ENCODE measurements at regions of chr4 and their contacts with region 1.

Region 1: DNA sequence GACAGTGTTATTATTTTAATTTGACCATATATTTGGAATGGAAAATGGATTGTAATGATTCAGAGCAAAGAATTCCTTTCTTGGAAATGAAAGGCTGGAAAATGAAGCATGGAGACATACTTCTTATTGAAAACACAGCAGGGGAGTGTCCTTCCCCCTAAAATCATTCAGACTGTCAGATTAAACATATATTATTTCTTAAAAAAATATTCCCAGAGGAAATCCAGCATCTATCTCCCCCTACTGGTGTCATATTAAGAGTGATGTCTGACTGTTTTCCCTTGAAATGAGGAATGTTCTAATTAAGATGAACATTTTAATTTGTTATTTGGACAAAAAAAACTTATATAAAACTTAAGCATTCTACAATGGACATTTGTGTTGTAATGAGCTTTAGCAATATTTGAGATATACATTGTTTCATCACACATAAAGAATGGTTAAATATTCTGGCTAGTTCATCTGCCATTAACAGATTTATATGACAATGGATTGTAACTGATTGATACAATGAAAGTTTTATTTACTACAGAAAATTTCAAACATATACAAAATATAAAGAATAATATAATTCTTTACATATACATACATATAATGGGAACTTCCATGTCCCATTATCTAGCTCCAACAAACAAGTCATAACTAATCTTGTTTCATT is 264.6 kb downstream of the SPRY1 start:
- DNase-seq: no peak
- ATAC-seq: no peak
- H3K4me3 ChIP-seq: no peak overlapping the region
- H3K27ac ChIP-seq: no peak overlapping the region
- H3K4me1 ChIP-seq: no peaks in the 10 kb centered on the region
- H3K27me3 ChIP-seq: no peaks in the 10 kb centered on the region
- CTCF ChIP-seq: peak in 8 of 9 donors; percentile 34 to 70 (median 55)

Region 2: DNA sequence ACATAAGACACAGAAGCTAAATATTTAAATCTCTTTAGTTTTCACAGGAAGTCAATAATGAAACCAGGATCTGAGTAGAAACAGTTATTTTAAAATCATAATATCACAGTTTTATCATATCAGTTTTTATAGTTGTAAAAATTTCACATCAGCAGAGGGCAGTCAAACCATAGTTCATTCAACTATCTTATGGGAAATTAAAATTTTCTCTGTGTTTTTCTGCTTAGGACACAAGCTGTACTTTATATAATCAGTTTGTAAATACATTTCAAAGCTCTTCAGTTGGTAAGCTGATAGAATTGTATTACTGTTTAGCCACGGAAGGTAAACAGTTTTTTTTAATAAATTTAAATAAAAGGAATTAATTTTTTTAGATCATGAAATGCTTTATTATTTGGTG is 534.0 kb before region 1 on chr4:
- intact Hi-C with region 1: loop called in 6 of 10 experiments (anchors 5 to 10 kb)
- DNase-seq: no peak
- ATAC-seq: peak in 3 of 8 donors; percentile 46 to 55 (median 49)
- H3K4me3 ChIP-seq: no peak overlapping the region
- H3K27ac ChIP-seq: peak overlapping the region in 4 of 10 donors; percentile 28 to 36 (median 33)
- H3K4me1 ChIP-seq: peaks cover 0 to 25% (median 4%) of the 10 kb centered on the region in 9 donors
- H3K27me3 ChIP-seq: no peaks in the 10 kb centered on the region
- CTCF ChIP-seq: peak in 8 of 9 donors; percentile 31 to 69 (median 50)

Region 3: GRCh38 chr4:123390846-123391456 is 270.3 kb before region 1 on chr4:
- intact Hi-C with region 1: loop called in 4 of 10 experiments (anchors 5 to 10 kb)
- DNase-seq: no peak
- ATAC-seq: no peak
- H3K4me3 ChIP-seq: no peak overlapping the region
- H3K27ac ChIP-seq: peak overlapping the region in 1 of 10 donors; percentile 26
- H3K4me1 ChIP-seq: peaks cover 0 to 16% (median 12%) of the 10 kb centered on the region in 9 donors
- H3K27me3 ChIP-seq: no peaks in the 10 kb centered on the region
- CTCF ChIP-seq: peak; percentile 25 to 73 (median 59)

Region 4: DNA sequence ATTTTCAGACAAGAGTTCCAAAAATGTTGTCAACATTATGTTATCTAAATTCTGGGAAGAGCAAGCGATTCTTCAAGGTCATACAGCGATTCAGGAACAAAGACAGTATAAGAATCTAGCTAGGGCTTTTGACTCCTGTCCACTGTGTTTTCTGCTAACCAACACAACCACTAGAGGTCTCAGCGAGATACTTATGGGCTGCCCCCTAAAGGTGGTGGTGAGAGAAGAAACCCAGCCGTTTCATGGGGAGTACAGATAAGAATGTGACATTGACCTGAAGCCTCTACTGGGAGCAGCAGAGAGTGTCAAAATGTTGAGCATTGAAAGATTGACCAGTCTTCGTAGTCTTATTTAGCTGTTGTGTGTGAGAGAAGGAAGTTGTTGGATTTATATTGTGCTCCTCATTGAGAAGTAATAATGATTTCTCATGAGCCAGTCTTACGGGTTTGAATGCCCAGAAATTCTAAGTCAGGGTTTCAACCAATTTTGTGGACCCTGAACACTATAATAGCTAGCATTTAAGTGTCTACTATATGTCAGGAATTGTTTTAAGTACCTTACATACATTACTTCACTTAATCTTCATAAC is 96.4 kb before region 1 on chr4:
- intact Hi-C with region 1: loop called in 2 of 10 experiments (anchors 5 to 10 kb)
- DNase-seq: peak in 1 of 2 donors; percentile 69
- ATAC-seq: peak; percentile 68 to 94 (median 91)
- H3K4me3 ChIP-seq: no peak overlapping the region
- H3K27ac ChIP-seq: no peak overlapping the region
- H3K4me1 ChIP-seq: peaks cover 0 to 7% (median 4%) of the 10 kb centered on the region in 9 donors
- H3K27me3 ChIP-seq: no peaks in the 10 kb centered on the region
- CTCF ChIP-seq: peak; percentile 56 to 92 (median 73)

Region 5: DNA sequence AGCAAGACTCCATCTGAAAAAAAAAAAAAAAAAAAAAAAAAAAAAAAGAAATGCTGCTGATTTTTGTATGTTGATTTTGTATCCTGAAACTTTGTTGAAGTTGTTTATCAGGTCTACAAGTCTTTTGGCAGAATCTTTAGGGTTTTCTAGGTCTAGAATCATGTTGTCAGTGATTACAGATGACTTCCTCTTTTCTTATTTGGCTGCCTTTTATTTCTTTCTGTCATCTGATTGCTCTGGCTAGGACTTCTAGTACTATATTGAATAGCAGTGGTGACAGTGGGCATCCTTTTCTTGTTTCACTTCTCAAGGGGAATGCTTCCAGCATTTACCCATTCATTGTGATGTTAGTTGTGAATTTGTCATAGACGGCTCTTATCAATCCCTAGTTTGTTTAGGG is 69.8 kb after region 1 on chr4:
- intact Hi-C with region 1: no loop called
- DNase-seq: no peak
- ATAC-seq: no peak
- H3K4me3 ChIP-seq: no peak overlapping the region
- H3K27ac ChIP-seq: no peak overlapping the region
- H3K4me1 ChIP-seq: no peaks in the 10 kb centered on the region
- H3K27me3 ChIP-seq: no peaks in the 10 kb centered on the region
- CTCF ChIP-seq: no peak

Region 6: DNA sequence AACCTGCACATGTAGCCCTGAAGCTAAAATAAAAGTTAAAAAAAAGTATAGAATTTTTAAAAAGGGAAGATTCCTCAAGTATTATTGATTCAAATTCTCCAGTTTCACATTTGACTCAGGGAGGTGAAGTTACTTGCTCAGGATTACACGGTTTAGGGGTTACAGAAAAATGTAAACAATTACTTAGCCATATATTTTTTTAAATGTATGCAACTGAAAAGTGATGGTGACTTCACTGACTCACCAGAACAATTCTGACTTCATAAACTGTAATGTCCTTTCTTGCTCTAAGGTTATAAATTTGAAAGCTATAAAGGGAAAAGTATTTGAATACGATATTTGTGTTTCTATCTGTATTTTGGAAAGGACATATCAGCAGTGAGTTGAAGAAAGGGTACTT is 106.6 kb after region 1 on chr4:
- intact Hi-C with region 1: no loop called
- DNase-seq: no peak
- ATAC-seq: no peak
- H3K4me3 ChIP-seq: no peak overlapping the region
- H3K27ac ChIP-seq: no peak overlapping the region
- H3K4me1 ChIP-seq: no peaks in the 10 kb centered on the region
- H3K27me3 ChIP-seq: no peaks in the 10 kb centered on the region
- CTCF ChIP-seq: no peak

Region 7: DNA sequence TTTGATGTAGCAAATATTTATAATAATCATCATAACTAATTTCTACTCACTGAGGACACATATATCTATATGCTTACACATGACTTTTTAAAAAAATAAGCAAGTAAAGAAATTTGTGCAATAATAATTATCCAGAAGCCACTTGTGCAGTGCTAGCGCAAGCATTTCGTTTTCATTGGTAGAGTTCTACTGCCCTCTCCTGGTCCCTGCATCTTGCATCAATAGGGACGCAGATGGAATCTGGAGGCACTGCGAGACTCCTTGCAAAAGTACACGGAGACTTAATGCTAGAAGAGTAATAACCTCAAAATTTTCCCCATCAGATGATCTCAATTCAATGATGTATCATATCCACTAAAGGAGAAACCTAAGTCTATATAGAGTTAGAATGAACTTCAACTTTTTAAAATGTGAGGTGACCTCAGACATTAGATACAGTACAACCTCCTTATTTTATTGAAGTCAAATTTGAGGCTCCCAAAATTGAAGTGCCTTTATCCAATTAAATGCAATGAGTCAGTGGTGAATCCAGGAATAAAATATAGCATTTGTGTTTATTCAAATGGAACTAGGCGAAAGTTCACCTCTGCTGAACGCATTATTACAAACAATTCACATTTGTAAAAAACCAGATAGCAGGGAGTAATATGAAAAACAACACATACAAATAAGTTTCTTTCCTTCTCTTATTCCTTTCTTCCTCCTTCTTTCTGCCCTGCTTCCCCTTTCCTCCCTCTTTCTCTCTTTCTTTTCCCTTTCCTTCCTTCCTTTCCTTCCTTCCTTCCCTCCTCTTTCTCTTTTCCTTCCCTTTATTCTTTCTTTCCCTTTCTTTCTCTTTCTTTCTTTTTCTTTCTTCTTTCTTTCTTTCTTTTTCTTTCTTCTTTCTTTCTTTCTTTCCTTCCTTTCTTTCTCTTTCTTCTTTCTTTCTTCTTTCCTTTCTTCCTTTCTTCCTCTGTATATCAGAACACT is 601.3 kb after region 1 on chr4:
- intact Hi-C with region 1: loop called in 1 of 10 experiments (anchors 5 kb)
- DNase-seq: peak in 1 of 2 donors; percentile 73
- ATAC-seq: peak; percentile 75 to 90 (median 84)
- H3K4me3 ChIP-seq: no peak overlapping the region
- H3K27ac ChIP-seq: peak overlapping the region in 1 of 10 donors; percentile 29
- H3K4me1 ChIP-seq: peaks cover 0 to 6% (median 0%) of the 10 kb centered on the region in 9 donors
- H3K27me3 ChIP-seq: no peaks in the 10 kb centered on the region
- CTCF ChIP-seq: peak; percentile 71 to 94 (median 85)